ENCODE measurements at regions of chr13 and their contacts with region 1.

Region 1: GRCh38 chr13:107211073-107211472 is 643.1 kb upstream of the ARGLU1 start:
- DNase-seq: peak; percentile 58 to 65
- ATAC-seq: peak in 3 of 4 donors; percentile 58 to 73 (median 60)
- H3K4me3 ChIP-seq: no peak overlapping the region
- H3K27ac ChIP-seq: no peak overlapping the region
- H3K4me1 ChIP-seq: no peaks in the 10 kb centered on the region
- H3K27me3 ChIP-seq: no peaks in the 10 kb centered on the region
- CTCF ChIP-seq: peak; percentile 73

Region 2: DNA sequence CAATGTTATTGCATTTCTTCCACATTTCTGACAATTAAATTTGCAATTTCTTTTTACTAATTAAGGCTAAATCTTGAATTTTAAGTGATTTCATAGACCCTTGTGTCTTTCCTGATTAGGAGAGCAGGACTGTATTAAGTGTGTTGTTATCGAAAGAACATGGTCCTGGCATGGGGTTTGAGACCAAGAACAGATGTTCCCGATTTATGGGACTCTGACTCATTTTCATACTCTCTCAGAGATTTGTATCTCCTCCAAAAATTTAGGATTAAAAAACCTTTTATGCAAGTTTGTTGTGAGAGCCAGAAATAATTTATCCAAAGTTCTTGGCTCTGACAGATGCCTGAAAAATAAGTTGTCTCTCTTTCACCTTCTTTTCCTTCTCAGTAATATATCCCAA is 53.8 kb before region 1 on chr13:
- intact Hi-C with region 1: no loop called
- DNase-seq: no peak
- ATAC-seq: no peak
- H3K4me3 ChIP-seq: no peak overlapping the region
- H3K27ac ChIP-seq: no peak overlapping the region
- H3K4me1 ChIP-seq: no peaks in the 10 kb centered on the region
- H3K27me3 ChIP-seq: no peaks in the 10 kb centered on the region
- CTCF ChIP-seq: no peak

Region 3: DNA sequence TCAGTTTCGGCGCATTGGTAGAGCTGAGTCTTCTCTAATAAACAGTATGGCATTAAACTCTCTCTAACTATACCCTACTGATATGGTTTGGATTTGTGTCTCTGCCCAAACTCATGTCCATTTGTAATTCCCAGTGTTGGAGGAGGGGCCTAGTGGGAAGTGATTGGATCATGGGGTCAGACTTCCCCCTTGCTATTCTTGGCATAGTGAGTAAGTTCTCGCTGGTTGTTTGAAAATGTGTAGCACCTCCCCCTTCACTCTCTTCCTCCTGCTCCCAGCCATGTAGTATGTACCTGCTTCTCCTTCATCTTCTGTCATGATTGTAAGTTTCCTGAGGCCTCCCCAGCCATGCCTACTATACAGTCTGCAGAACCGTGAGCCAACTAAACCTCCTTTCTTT is 39.6 kb after region 1 on chr13:
- intact Hi-C with region 1: no loop called
- DNase-seq: no peak
- ATAC-seq: no peak
- H3K4me3 ChIP-seq: no peak overlapping the region
- H3K27ac ChIP-seq: no peak overlapping the region
- H3K4me1 ChIP-seq: no peaks in the 10 kb centered on the region
- H3K27me3 ChIP-seq: no peaks in the 10 kb centered on the region
- CTCF ChIP-seq: no peak

Region 4: GRCh38 chr13:108155185-108156106 is 944.4 kb after region 1 on chr13:
- intact Hi-C with region 1: loop called (anchors 2 to 5 kb)
- DNase-seq: peak in 1 of 2 donors; percentile 24
- ATAC-seq: no peak
- H3K4me3 ChIP-seq: no peak overlapping the region
- H3K27ac ChIP-seq: no peak overlapping the region
- H3K4me1 ChIP-seq: no peaks in the 10 kb centered on the region
- H3K27me3 ChIP-seq: no peaks in the 10 kb centered on the region
- CTCF ChIP-seq: peak; percentile 81

Measured in psoas muscle (tissue), 8 donors.